GM12878 (cell line): ENCODE measurements at regions of chr7 and their contacts with region 1.

Region 1: DNA sequence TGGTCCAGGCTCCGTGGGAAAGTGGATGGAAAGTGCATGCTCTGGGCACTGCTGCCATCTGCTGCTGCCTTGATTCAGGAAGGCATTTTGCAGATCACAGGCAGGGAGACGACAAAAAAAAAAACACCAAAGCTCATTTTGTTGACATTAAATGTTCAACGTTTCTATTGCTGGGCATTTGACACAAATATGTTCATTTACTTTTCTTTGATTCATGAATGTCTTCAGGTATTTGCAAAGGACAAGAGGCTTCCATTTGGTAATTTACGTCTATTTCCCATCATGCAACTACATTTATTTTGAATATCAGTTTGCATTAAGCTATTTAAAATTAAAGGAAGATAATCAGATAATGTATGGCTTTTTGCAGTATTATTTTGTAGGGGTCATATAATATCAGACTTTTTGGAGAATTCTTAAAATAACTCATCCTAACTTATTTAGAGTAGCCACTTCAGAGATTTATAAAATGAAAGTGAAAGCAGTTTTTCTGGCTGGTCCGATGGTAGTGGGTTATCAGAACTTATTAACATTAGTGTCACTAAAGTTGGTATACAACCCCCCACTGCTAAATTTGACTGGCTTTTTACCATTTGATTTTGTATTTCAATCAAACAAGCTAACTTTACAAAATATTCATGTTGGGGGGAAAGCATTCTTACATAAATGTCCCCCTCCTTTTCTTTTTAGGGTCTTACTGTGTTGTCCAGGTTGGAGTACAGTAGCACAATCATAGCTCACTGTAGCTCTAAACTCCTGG is 65.3 kb downstream of the PDIA4 start:
- DNase-seq: peak; percentile 68
- ATAC-seq: peak; percentile 80
- H3K4me3 ChIP-seq: peak overlapping the region; percentile 61
- H3K27ac ChIP-seq: peak overlapping the region; percentile 54
- H3K4me1 ChIP-seq: no peaks in the 10 kb centered on the region; the same call in 1 of the 2 replicates
- H3K27me3 ChIP-seq: peaks cover 0 to 3% of the 10 kb centered on the region in 2 experiments; a peak in 2 of 4 replicates
- CTCF ChIP-seq: peak; percentile 60 to 97 (median 95); a peak in 5 of 6 replicates
- EP300 ChIP-seq: no peak
- POLR2A ChIP-seq: no peak
- RAD21 ChIP-seq: peak; percentile 97

Region 2: GRCh38 chr7:148211740-148212151 is 751.3 kb before region 1 on chr7:
- CTCF ChIA-PET with region 1: no interaction called
- POLR2A ChIA-PET with region 1: no interaction called
- RAD21 ChIA-PET with region 1: no interaction called
- SMC1A ChIA-PET with region 1: no interaction called
- in situ Hi-C with region 1: no loop called
- intact Hi-C with region 1: no loop called
- DNase-seq: no peak
- ATAC-seq: no peak
- H3K4me3 ChIP-seq: no peak overlapping the region
- H3K27ac ChIP-seq: no peak overlapping the region
- H3K4me1 ChIP-seq: no peaks in the 10 kb centered on the region
- H3K27me3 ChIP-seq: 0 out of 4 replicates have a peak, but pooled peaks cover 0 to 4% of the 10 kb centered on the region in 2 experiments
- CTCF ChIP-seq: no peak
- EP300 ChIP-seq: no peak
- POLR2A ChIP-seq: no peak
- RAD21 ChIP-seq: no peak

Region 3: GRCh38 chr7:148262721-148263229 is 700.2 kb before region 1 on chr7:
- CTCF ChIA-PET with region 1: interaction called, 32 read pairs
- POLR2A ChIA-PET with region 1: no interaction called
- RAD21 ChIA-PET with region 1: interaction called, 15 read pairs
- SMC1A ChIA-PET with region 1: interaction called, 6 read pairs
- in situ Hi-C with region 1: loop called (anchors 5 kb)
- intact Hi-C with region 1: loop called (anchors 1 kb)
- DNase-seq: no peak
- ATAC-seq: peak; percentile 89
- H3K4me3 ChIP-seq: no peak overlapping the region
- H3K27ac ChIP-seq: no peak overlapping the region
- H3K4me1 ChIP-seq: no peaks in the 10 kb centered on the region
- H3K27me3 ChIP-seq: no peaks in the 10 kb centered on the region; a peak in 1 of 4 replicates
- CTCF ChIP-seq: peak; percentile 80 to 94 (median 90)
- EP300 ChIP-seq: no peak
- POLR2A ChIP-seq: no peak
- RAD21 ChIP-seq: peak; percentile 63

Region 4: GRCh38 chr7:148563583-148564274 is 399.3 kb before region 1 on chr7:
- CTCF ChIA-PET with region 1: interaction called, 13 read pairs
- POLR2A ChIA-PET with region 1: no interaction called
- RAD21 ChIA-PET with region 1: interaction called, 3 read pairs
- SMC1A ChIA-PET with region 1: interaction called, 5 read pairs
- in situ Hi-C with region 1: no loop called
- intact Hi-C with region 1: no loop called
- DNase-seq: no peak
- ATAC-seq: peak; percentile 79
- H3K4me3 ChIP-seq: peak overlapping the region; percentile 20; the same call in 1 of the 2 replicates
- H3K27ac ChIP-seq: 0 out of 2 replicates have a peak overlapping the region, but pooled peaks have one; percentile 10
- H3K4me1 ChIP-seq: peaks cover 18% of the 10 kb centered on the region; the same call in 1 of the 2 replicates
- H3K27me3 ChIP-seq: peaks cover 0 to 3% of the 10 kb centered on the region in 2 experiments; a peak in 1 of 4 replicates
- CTCF ChIP-seq: no peak
- EP300 ChIP-seq: no peak
- POLR2A ChIP-seq: no peak
- RAD21 ChIP-seq: no peak

Region 5: GRCh38 chr7:148698397-148699023 is 264.5 kb before region 1 on chr7 and contains the start of gene CUL1:
- CTCF ChIA-PET with region 1: interaction called, 3 read pairs
- POLR2A ChIA-PET with region 1: no interaction called
- RAD21 ChIA-PET with region 1: interaction called, 3 read pairs
- SMC1A ChIA-PET with region 1: interaction called, 5 read pairs
- in situ Hi-C with region 1: no loop called
- intact Hi-C with region 1: loop called (anchors 5 kb)
- DNase-seq: no peak
- ATAC-seq: peak; percentile 82
- H3K4me3 ChIP-seq: peak within 1 kb of the TSS; percentile 94
- H3K27ac ChIP-seq: peak within 1 kb of the TSS; percentile 79
- H3K4me1 ChIP-seq: peaks cover 9% of the 10 kb centered on the region
- H3K27me3 ChIP-seq: no peaks in the 10 kb centered on the region
- CTCF ChIP-seq: no peak
- EP300 ChIP-seq: no peak
- POLR2A ChIP-seq: peak; percentile 83
- RAD21 ChIP-seq: no peak
- polyA plus RNA-seq, gene CUL1: 13.3 to 21.4 TPM

Region 6: GRCh38 chr7:148847815-148848695 is 114.9 kb before region 1 on chr7:
- CTCF ChIA-PET with region 1: interaction called, 13 read pairs
- POLR2A ChIA-PET with region 1: no interaction called
- RAD21 ChIA-PET with region 1: interaction called, 3 read pairs
- SMC1A ChIA-PET with region 1: no interaction called
- in situ Hi-C with region 1: no loop called
- intact Hi-C with region 1: no loop called
- DNase-seq: no peak
- ATAC-seq: no peak
- H3K4me3 ChIP-seq: no peak overlapping the region
- H3K27ac ChIP-seq: no peak overlapping the region
- H3K4me1 ChIP-seq: no peaks in the 10 kb centered on the region
- H3K27me3 ChIP-seq: no peaks in the 10 kb centered on the region
- CTCF ChIP-seq: no peak
- EP300 ChIP-seq: no peak
- POLR2A ChIP-seq: no peak
- RAD21 ChIP-seq: no peak

Region 7: GRCh38 chr7:148940702-148941597 is 22.1 kb before region 1 on chr7:
- CTCF ChIA-PET with region 1: interaction called, 14 read pairs
- POLR2A ChIA-PET with region 1: interaction called, 3 read pairs
- RAD21 ChIA-PET with region 1: interaction called, 11 read pairs
- SMC1A ChIA-PET with region 1: interaction called, 12 read pairs
- in situ Hi-C with region 1: no loop called
- intact Hi-C with region 1: no loop called
- DNase-seq: peak; percentile 49
- ATAC-seq: peak; percentile 90
- H3K4me3 ChIP-seq: peak overlapping the region; percentile 89
- H3K27ac ChIP-seq: peak overlapping the region; percentile 71
- H3K4me1 ChIP-seq: peaks cover 6% of the 10 kb centered on the region; the same call in 1 of the 2 replicates
- H3K27me3 ChIP-seq: no peaks in the 10 kb centered on the region
- CTCF ChIP-seq: no peak
- EP300 ChIP-seq: no peak
- POLR2A ChIP-seq: peak; percentile 83
- RAD21 ChIP-seq: 0 out of 2 replicates have a peak, but pooled peaks have one; percentile 2

Region 8: DNA sequence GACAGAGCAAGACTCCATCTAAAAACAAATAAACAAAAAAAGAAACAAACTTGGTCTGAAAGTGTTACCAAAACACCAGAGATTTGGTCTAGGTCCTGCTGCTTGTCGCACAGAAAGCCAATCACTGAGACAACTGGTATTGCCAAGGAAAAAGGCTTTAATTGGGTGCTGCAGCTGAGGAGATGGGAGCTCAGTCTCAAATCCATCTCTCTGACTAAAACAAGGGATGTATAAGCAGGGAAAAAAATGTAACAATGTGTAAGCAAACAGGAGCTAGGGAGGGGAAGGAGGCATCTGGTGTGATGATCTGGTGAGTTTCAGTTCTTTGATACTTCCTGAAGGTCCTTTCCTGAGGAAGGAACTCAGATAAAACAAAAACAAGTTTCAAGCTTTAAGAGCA is 73.7 kb after region 1 on chr7:
- CTCF ChIA-PET with region 1: no interaction called
- POLR2A ChIA-PET with region 1: no interaction called
- RAD21 ChIA-PET with region 1: no interaction called
- SMC1A ChIA-PET with region 1: no interaction called
- in situ Hi-C with region 1: no loop called
- intact Hi-C with region 1: no loop called
- DNase-seq: no peak
- ATAC-seq: no peak
- H3K4me3 ChIP-seq: no peak overlapping the region
- H3K27ac ChIP-seq: no peak overlapping the region
- H3K4me1 ChIP-seq: no peaks in the 10 kb centered on the region
- H3K27me3 ChIP-seq: no peaks in the 10 kb centered on the region; a peak in 1 of 4 replicates
- CTCF ChIP-seq: no peak
- EP300 ChIP-seq: no peak
- POLR2A ChIP-seq: no peak
- RAD21 ChIP-seq: no peak